Activated CD8-positive, alpha-beta T cell treated with anti-CD3 and anti-CD28 coated beads, Interleukin-2, amount 10 ng/mL, durations not matched to agents 7 days and 5 days (primary cell): ENCODE measurements at regions of chr13 and their contacts with region 1.

Region 1: GRCh38 chr13:95624020-95624419 is 20.5 kb downstream of the DZIP1 start:
- DNase-seq: peak; percentile 41
- ATAC-seq: no peak
- H3K4me3 Mint-ChIP-seq: no peak overlapping the region
- H3K27ac Mint-ChIP-seq: no peak overlapping the region
- H3K4me1 Mint-ChIP-seq: no peaks in the 10 kb centered on the region
- H3K27me3 Mint-ChIP-seq: peaks cover 21% of the 10 kb centered on the region

Region 2: DNA sequence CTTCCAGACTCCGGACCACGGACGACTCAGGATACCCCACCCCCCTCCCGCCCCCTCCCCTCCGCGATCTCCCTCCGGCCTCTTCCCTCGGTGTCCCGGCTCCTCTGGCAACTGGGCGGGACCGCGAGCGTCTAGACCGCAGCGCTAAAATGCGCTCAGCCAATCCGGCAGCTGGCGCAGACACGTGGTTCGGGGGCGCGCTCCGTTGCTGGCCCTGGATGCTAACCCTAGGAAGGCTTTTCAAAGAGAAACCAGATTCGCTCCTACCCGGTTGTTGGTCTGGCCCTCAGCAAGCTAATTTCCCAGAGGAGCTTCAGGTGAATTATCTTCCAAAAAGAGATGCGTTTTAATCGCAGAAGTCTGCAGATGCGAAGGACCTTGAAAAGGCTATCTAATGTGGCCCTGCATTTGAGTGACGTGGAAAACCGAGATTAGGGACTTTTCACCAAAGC is 20.6 kb after region 1 on chr13 and contains the start of gene DZIP1:
- CTCF ChIA-PET with region 1: no interaction called
- POLR2A ChIA-PET with region 1: no interaction called
- DNase-seq: peak; percentile 51
- ATAC-seq: peak; percentile 90
- H3K4me3 Mint-ChIP-seq: peak within 1 kb of the TSS; percentile 70
- H3K27ac Mint-ChIP-seq: no peak within 1 kb of the TSS
- H3K4me1 Mint-ChIP-seq: peaks cover 10% of the 10 kb centered on the region
- H3K27me3 Mint-ChIP-seq: peaks cover 32% of the 10 kb centered on the region
- total RNA-seq, gene DZIP1: 0.26 to 0.34 TPM

Region 3: GRCh38 chr13:95660981-95661581 is 37.1 kb after region 1 on chr13:
- CTCF ChIA-PET with region 1: interaction called, 14 read pairs
- POLR2A ChIA-PET with region 1: no interaction called
- DNase-seq: peak; percentile 44
- ATAC-seq: no peak
- H3K4me3 Mint-ChIP-seq: no peak overlapping the region
- H3K27ac Mint-ChIP-seq: no peak overlapping the region
- H3K4me1 Mint-ChIP-seq: no peaks in the 10 kb centered on the region
- H3K27me3 Mint-ChIP-seq: peaks cover 21% of the 10 kb centered on the region